ENCODE measurements at regions of chr10 and their contacts with region 1.

Region 1: GRCh38 chr10:12710594-12711349 is 290.7 kb downstream of the CCDC3 start:
- DNase-seq: peak; percentile 73
- H3K4me3 ChIP-seq: no peak overlapping the region
- H3K27ac ChIP-seq: peak overlapping the region; percentile 80
- H3K27me3 ChIP-seq: no peaks in the 10 kb centered on the region
- CTCF ChIP-seq: peak; percentile 99

Region 2: GRCh38 chr10:12221323-12222298 is 489.2 kb before region 1 on chr10:
- CTCF ChIA-PET with region 1: interaction called, 93 read pairs
- POLR2A ChIA-PET with region 1: no interaction called
- DNase-seq: no peak
- H3K4me3 ChIP-seq: no peak overlapping the region
- H3K27ac ChIP-seq: peak overlapping the region; percentile 57
- H3K27me3 ChIP-seq: no peaks in the 10 kb centered on the region
- CTCF ChIP-seq: no peak

Region 3: DNA sequence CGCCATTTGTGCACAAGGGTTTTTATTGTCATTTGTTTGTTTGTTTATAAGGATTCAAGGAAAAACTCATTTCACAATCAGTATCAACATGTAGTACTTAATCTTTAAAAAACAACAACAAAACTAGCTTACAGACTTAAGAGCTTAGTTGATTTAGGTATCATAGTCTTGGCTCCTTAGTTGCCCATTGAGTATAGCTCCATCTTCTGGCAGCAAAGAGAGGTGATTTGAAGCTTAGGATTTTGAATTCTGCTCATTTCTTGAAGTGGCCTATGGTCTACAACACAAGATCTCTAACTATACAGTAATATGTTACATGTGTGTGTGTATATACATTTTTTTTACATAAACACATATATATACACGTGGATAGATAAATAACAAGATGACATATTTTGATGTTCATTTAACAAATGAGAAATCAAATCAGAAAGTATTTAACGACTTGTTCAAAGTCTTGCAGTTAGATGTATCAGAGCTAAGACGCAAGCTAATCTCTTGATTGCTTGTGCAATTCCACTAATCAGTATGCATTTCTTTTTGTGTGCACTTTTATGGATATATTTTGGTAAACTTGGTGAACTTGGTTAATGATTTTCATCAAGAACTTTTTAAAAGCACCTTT is 54.1 kb before region 1 on chr10:
- CTCF ChIA-PET with region 1: interaction called, 13 read pairs
- POLR2A ChIA-PET with region 1: no interaction called
- DNase-seq: peak; percentile 11
- H3K4me3 ChIP-seq: no peak overlapping the region
- H3K27ac ChIP-seq: no peak overlapping the region
- H3K27me3 ChIP-seq: no peaks in the 10 kb centered on the region
- CTCF ChIP-seq: peak; percentile 76

Region 4: GRCh38 chr10:12800302-12800701 is 89.5 kb after region 1 on chr10:
- CTCF ChIA-PET with region 1: no interaction called
- POLR2A ChIA-PET with region 1: no interaction called
- DNase-seq: no peak
- H3K4me3 ChIP-seq: no peak overlapping the region
- H3K27ac ChIP-seq: no peak overlapping the region
- H3K27me3 ChIP-seq: no peaks in the 10 kb centered on the region
- CTCF ChIP-seq: 0 out of 2 replicates have a peak, but pooled peaks have one; percentile 12

Region 5: DNA sequence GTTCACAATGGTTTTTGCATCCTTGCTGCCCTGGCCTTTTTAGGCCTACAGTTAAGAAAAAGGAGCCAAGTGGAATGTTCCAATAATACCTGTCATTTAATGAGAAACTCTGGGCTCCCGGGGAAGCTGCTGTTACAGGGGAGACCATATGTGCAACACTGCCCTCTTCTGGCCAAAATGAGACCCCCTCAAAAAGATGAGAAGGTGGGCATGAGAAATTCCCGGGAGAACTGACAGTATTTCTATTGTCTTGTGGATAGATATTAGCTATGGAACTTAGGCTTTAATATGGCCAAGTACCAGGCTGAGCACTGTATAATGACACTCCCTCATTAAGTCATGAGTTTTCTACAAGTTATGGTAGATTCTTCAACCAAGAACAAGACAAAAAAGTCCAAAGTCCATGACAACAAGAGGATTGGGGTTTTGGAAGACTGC is 191.4 kb after region 1 on chr10:
- CTCF ChIA-PET with region 1: interaction called, 46 read pairs
- POLR2A ChIA-PET with region 1: no interaction called
- DNase-seq: peak; percentile 30
- H3K4me3 ChIP-seq: no peak overlapping the region
- H3K27ac ChIP-seq: no peak overlapping the region
- H3K27me3 ChIP-seq: no peaks in the 10 kb centered on the region
- CTCF ChIP-seq: peak; percentile 82

Measured in AG04450 (cell line).